Activated naive CD4-positive, alpha-beta T cell treated with anti-CD3 and anti-CD28 coated beads, Interleukin-2, amount 10 ng/mL, durations not matched to agents 7 days and 5 days (primary cell): ENCODE measurements at regions of chr6 and their contacts with region 1.

Region 1: GRCh38 chr6:158853072-158853871 is 34.1 kb upstream of the EZR start:
- DNase-seq: peak; percentile 94
- H3K4me3 Mint-ChIP-seq: no peak overlapping the region
- H3K27ac Mint-ChIP-seq: no peak overlapping the region
- H3K4me1 Mint-ChIP-seq: peaks cover 33% of the 10 kb centered on the region
- H3K27me3 Mint-ChIP-seq: peaks cover 2% of the 10 kb centered on the region

Region 2: GRCh38 chr6:158799051-158799792 is 54.0 kb before region 1 on chr6:
- CTCF ChIA-PET with region 1: no interaction called
- DNase-seq: no peak
- H3K4me3 Mint-ChIP-seq: no peak overlapping the region
- H3K27ac Mint-ChIP-seq: peak overlapping the region; percentile 42
- H3K4me1 Mint-ChIP-seq: peaks cover 79% of the 10 kb centered on the region
- H3K27me3 Mint-ChIP-seq: no peaks in the 10 kb centered on the region

Region 3: GRCh38 chr6:158869826-158870648 is 16.8 kb after region 1 on chr6:
- CTCF ChIA-PET with region 1: interaction called, 19 read pairs
- DNase-seq: peak; percentile 96
- H3K4me3 Mint-ChIP-seq: peak overlapping the region; percentile 78
- H3K27ac Mint-ChIP-seq: peak overlapping the region; percentile 99
- H3K4me1 Mint-ChIP-seq: peaks cover 39% of the 10 kb centered on the region
- H3K27me3 Mint-ChIP-seq: peaks cover 22% of the 10 kb centered on the region